ENCODE measurements at regions of chr11 and their contacts with region 1.

Region 1: DNA sequence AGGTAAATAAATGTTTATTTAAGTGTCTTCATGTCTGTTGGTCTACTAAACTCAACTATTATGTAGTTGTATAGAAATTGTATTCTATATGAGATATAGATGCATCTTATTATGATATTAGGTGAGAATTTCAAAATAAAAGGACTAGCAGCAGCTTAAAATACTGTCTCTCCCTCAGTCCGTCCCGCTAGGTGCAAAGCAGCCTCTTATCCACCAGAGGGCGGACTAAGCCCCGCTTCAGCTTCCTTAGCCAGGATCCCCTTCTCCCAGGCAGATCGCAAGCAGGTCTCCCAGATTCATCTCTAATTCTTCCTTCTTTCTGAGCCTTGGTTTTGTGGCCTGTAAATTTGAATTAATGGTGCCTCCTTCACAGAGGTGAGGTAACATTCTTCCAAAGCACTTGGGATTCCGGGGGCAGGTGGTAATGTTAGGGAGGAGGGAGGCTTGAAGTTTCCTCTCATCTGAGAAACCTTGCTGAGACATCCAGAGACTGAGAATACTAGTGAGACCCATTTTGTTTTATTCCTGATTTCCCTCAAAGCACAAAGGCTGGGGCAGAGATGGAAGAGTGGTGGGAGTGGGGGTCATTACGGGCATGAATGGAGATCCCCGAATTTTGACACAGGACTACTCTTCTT is 13.5 kb upstream of the INSC start:
- DNase-seq: peak; percentile 77
- ATAC-seq: peak; percentile 96
- H3K4me3 Mint-ChIP-seq: no peak overlapping the region
- H3K27ac Mint-ChIP-seq: no peak overlapping the region
- H3K4me1 Mint-ChIP-seq: no peaks in the 10 kb centered on the region
- H3K27me3 Mint-ChIP-seq: peaks cover 3% of the 10 kb centered on the region; the same call in 1 of the 2 replicates
- CTCF ChIP-seq: peak; percentile 71; the same call in 1 of the 2 replicates

Region 2: GRCh38 chr11:14826600-14826999 is 274.6 kb before region 1 on chr11:
- CTCF ChIA-PET with region 1: no interaction called
- POLR2A ChIA-PET with region 1: no interaction called
- DNase-seq: no peak
- ATAC-seq: no peak
- H3K4me3 Mint-ChIP-seq: no peak overlapping the region
- H3K27ac Mint-ChIP-seq: no peak overlapping the region
- H3K4me1 Mint-ChIP-seq: no peaks in the 10 kb centered on the region
- H3K27me3 Mint-ChIP-seq: no peaks in the 10 kb centered on the region
- CTCF ChIP-seq: no peak

Region 3: GRCh38 chr11:15113381-15113780 is 12.2 kb after region 1 on chr11:
- CTCF ChIA-PET with region 1: interaction called, 22 read pairs
- POLR2A ChIA-PET with region 1: no interaction called
- DNase-seq: no peak
- ATAC-seq: no peak
- H3K4me3 Mint-ChIP-seq: peak overlapping the region; percentile 16; the same call in 1 of the 2 replicates
- H3K27ac Mint-ChIP-seq: no peak overlapping the region
- H3K4me1 Mint-ChIP-seq: peaks cover 11% of the 10 kb centered on the region
- H3K27me3 Mint-ChIP-seq: peaks cover 34% of the 10 kb centered on the region
- CTCF ChIP-seq: no peak

Region 4: DNA sequence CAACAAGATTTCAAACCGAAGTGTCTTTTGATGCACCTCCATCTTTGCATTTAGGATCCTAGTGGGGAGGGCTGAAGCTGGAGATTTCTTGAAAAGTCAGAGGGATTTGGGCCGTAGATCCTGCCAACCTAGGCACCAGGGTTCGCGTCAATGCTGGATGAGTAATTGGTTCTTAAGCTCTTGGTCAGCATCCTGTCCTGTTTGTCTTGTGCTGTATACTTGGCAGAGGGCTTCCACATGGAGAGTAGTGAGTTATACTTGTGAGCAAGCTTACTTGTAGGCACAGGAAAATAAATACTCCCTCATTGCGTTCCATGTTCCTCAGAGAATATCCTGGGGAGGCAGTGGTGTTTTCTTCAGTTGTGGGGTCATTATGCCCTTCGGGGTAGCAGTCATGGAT is 26.1 kb after region 1 on chr11:
- CTCF ChIA-PET with region 1: interaction called, 13 read pairs
- POLR2A ChIA-PET with region 1: no interaction called
- DNase-seq: no peak
- ATAC-seq: no peak
- H3K4me3 Mint-ChIP-seq: no peak overlapping the region
- H3K27ac Mint-ChIP-seq: no peak overlapping the region
- H3K4me1 Mint-ChIP-seq: no peaks in the 10 kb centered on the region
- H3K27me3 Mint-ChIP-seq: no peaks in the 10 kb centered on the region
- CTCF ChIP-seq: no peak

Region 5: GRCh38 chr11:15139958-15140659 is 38.9 kb after region 1 on chr11:
- CTCF ChIA-PET with region 1: interaction called, 10 read pairs
- POLR2A ChIA-PET with region 1: no interaction called
- DNase-seq: no peak
- ATAC-seq: no peak
- H3K4me3 Mint-ChIP-seq: no peak overlapping the region
- H3K27ac Mint-ChIP-seq: no peak overlapping the region
- H3K4me1 Mint-ChIP-seq: no peaks in the 10 kb centered on the region
- H3K27me3 Mint-ChIP-seq: no peaks in the 10 kb centered on the region
- CTCF ChIP-seq: no peak

Region 6: DNA sequence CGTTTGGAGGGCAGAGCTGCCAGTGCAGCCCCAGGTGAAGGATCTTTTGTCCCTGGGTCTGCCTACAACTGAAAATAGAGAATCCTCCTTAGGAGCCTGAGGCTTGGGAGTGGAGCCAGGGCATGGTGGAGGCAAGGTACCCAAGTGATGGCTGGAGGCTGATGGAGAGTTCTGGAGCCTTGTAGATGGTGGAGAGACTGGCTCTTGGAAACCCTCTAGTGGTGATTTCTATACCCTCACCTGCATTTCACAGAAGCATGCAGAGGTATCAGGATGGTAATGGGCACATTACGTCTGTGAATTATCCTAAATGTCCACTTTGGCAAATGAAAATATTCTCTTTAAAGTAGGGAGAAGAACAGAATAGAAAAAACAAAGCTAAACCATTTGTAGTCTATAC is 57.9 kb after region 1 on chr11:
- CTCF ChIA-PET with region 1: interaction called, 13 read pairs
- POLR2A ChIA-PET with region 1: no interaction called
- DNase-seq: no peak
- ATAC-seq: peak; percentile 97
- H3K4me3 Mint-ChIP-seq: no peak overlapping the region
- H3K27ac Mint-ChIP-seq: no peak overlapping the region
- H3K4me1 Mint-ChIP-seq: no peaks in the 10 kb centered on the region
- H3K27me3 Mint-ChIP-seq: no peaks in the 10 kb centered on the region
- CTCF ChIP-seq: peak; percentile 42; the same call in 1 of the 2 replicates

Region 7: DNA sequence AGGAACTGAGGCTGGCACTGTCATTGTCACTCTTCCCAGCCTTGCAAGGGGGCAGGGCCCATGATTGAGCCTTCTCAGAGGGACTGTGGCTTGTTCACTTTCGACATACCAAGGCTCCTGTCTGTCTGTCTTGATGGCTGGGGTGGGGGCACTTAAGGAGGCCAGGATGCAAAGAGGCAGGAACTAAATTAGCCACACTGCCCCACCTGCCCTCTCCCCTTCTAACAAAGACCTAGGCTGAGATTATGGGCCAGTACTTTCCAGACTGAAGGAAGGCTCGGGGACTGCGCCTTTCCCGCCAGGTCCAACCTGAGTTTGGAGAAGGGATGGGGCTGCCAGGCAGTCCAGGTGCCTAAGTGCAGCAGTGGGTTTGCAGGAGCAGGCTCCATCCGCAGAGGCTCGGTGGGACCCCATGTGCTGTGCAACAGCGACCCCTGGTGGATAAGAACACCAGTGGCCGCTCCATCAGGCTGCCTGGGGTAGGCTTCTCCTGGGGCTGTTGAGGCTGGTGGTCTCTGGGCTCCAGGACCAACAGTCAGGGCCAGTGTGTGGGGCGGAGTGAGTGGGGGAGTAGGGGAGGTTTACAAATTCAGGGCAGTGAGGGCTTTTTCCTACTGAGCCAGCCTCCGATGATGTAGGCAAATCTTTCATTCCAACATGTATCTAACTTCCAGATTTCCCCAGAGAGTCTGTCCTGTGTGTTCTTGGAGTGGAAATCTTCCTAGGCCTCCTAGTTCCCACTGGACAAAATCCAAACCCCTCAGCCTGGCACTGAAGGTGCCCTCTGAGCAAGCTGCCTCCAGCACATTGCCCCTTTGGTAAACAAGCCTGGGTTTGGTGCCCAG is 107.4 kb after region 1 on chr11:
- CTCF ChIA-PET with region 1: interaction called, 21 read pairs
- POLR2A ChIA-PET with region 1: no interaction called
- DNase-seq: peak; percentile 90
- ATAC-seq: peak; percentile 98
- H3K4me3 Mint-ChIP-seq: no peak overlapping the region
- H3K27ac Mint-ChIP-seq: no peak overlapping the region
- H3K4me1 Mint-ChIP-seq: no peaks in the 10 kb centered on the region
- H3K27me3 Mint-ChIP-seq: no peaks in the 10 kb centered on the region
- CTCF ChIP-seq: peak; percentile 94